ENCODE measurements at regions of chr6 and their contacts with region 1.

Region 1: GRCh38 chr6:28981833-28982475 is 23.2 kb downstream of the ZNF311 start:
- DNase-seq: peak; percentile 65
- ATAC-seq: peak; percentile 61
- H3K4me3 Mint-ChIP-seq: peak overlapping the region; percentile 89
- H3K27ac Mint-ChIP-seq: peak overlapping the region; percentile 97
- H3K4me1 Mint-ChIP-seq: peaks cover 50% of the 10 kb centered on the region
- H3K27me3 Mint-ChIP-seq: peaks cover 32% of the 10 kb centered on the region
- CTCF ChIP-seq: no peak

Region 2: DNA sequence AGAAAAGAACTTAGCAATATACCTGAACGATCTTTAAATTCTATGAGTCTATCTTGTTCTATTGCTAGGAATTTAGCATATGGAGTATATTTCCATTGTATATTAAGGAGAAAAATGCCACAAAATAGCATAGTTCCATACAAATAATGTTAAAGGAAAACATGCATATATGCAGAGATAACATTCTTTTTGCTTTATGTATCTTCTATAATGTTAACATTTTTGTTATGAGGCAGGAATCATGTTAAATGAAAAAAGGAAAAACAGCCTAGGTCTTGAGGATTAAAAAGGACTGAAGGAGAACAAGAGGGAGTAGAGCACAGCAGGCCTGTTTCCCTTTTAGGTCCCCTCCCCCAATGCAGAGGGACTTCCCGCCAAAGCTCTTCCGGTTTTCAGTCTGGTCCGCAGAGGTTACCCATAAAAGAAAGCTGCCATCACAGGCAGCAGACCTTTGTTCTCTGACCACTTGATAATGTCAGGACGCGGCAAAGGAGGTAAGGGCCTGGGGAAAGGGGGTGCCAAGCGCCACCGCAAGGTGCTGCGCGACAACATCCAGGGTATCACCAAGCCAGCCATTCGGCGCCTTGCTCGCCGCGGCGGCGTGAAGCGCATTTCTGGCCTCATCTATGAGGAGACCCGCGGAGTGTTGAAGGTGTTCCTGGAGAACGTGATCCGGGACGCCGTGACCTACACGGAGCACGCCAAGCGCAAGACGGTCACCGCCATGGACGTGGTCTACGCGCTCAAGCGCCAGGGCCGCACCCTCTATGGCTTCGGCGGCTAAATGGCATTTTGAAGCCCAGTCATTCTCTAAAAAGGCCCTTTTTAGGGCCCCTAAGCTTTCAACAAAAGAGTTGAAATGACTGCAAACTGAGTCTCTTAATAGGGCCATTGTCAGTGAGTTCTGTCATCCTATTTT is 1842.9 kb before region 1 on chr6:
- CTCF ChIA-PET with region 1: no interaction called
- POLR2A ChIA-PET with region 1: interaction called, 10 read pairs
- intact Hi-C with region 1: no loop called
- DNase-seq: peak; percentile 59
- ATAC-seq: peak; percentile 82
- H3K4me3 Mint-ChIP-seq: peak overlapping the region; percentile 97
- H3K27ac Mint-ChIP-seq: peak overlapping the region; percentile 98
- H3K4me1 Mint-ChIP-seq: peaks cover 62% of the 10 kb centered on the region
- H3K27me3 Mint-ChIP-seq: no peaks in the 10 kb centered on the region
- CTCF ChIP-seq: no peak

Region 3: GRCh38 chr6:28863604-28864320 is 118.2 kb before region 1 on chr6:
- CTCF ChIA-PET with region 1: no interaction called
- POLR2A ChIA-PET with region 1: interaction called, 3 read pairs
- intact Hi-C with region 1: loop called (anchors 1 kb)
- DNase-seq: peak; percentile 54
- ATAC-seq: peak; percentile 30
- H3K4me3 Mint-ChIP-seq: peak overlapping the region; percentile 85
- H3K27ac Mint-ChIP-seq: peak overlapping the region; percentile 90
- H3K4me1 Mint-ChIP-seq: peaks cover 27% of the 10 kb centered on the region
- H3K27me3 Mint-ChIP-seq: peaks cover 4% of the 10 kb centered on the region
- CTCF ChIP-seq: no peak

Region 4: DNA sequence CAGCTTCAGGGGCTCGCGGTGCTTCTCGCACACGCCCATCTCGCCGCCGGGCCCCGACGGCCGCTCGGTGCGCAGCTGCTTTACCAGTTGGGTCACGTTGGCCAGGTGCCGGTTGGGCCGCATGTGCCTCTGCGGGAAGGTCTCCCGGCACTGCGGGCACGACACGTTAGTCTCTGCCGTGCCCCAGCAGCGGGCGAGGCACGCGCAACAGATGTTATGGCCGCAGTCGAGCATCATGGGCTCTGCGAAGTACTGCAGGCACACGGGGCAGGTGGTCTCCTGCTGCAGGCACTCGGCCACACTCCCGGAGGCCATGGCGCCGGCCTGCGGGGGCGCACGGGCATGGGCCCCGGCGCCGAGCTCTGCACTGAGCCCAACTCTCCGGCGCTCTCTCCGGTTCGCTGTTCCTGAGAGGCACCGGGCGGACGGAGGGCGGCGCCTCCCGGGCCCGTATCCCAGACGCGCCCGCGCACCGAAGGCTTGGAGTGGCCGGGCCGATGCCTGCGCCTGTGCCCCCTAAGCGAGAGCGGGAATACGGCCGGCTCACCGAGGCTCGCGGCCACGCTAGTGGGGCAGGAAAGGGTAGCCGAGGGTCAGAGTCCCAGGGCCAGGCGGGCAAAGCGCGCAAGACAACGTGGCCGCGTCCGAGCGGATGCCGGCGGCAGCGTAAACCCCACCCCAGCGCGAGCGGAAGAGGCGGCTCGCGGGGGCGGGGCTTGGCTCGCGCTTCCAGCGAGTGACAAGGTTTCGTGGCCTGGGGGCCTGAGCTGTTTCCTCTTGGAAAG is 58.4 kb before region 1 on chr6 and contains the start of gene TRIM27:
- CTCF ChIA-PET with region 1: interaction called, 3 read pairs
- POLR2A ChIA-PET with region 1: interaction called, 16 read pairs
- intact Hi-C with region 1: loop called (anchors 1 kb)
- DNase-seq: peak; percentile 85
- ATAC-seq: peak; percentile 87
- H3K4me3 Mint-ChIP-seq: peak within 1 kb of the TSS; percentile 92
- H3K27ac Mint-ChIP-seq: peak within 1 kb of the TSS; percentile 92
- H3K4me1 Mint-ChIP-seq: peaks cover 42% of the 10 kb centered on the region
- H3K27me3 Mint-ChIP-seq: no peaks in the 10 kb centered on the region
- CTCF ChIP-seq: no peak
- total RNA-seq, gene TRIM27: 59.5 and 64.8 TPM in 2 replicates

Region 5: DNA sequence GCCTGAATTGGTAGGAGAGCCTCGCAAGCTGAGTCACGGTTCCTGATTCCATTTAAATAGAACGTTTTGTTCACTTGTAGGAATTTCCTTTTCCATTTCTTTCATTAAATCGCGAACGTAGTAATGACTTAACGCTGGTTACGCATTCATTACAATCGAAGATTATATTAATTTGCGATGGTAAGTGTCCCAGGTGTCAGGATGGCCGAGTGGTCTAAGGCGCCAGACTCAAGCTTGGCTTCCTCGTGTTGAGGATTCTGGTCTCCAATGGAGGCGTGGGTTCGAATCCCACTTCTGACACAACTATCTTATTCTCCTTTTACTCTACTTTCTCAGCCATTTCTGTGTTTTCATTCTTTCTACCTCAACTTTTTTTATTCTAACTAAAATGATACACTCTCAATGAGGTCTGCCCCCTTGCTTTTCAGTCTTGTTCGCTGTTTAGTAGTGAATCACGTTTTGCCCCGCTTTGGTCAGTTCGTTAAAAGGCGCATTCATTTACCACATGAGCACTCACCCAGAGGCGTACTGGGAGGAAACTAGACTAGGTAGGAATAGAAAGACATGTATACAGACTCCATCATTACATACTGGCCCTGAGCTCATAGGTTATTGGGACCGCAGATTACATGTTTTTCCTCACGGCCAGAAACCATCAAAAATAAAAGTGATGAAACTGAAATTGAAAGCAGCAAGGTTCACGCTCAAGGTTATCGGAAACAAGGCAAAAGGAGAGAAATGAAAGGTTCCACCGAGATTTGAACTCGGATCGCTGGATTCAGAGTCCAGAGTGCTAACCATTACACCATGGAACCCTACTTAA is 40.9 kb before region 1 on chr6:
- CTCF ChIA-PET with region 1: interaction called, 3 read pairs
- POLR2A ChIA-PET with region 1: interaction called, 5 read pairs
- intact Hi-C with region 1: loop called (anchors 1 kb)
- DNase-seq: peak; percentile 36
- ATAC-seq: peak; percentile 66
- H3K4me3 Mint-ChIP-seq: peak overlapping the region; percentile 95
- H3K27ac Mint-ChIP-seq: peak overlapping the region; percentile 88
- H3K4me1 Mint-ChIP-seq: peaks cover 47% of the 10 kb centered on the region
- H3K27me3 Mint-ChIP-seq: peaks cover 3% of the 10 kb centered on the region
- CTCF ChIP-seq: no peak

Region 6: GRCh38 chr6:28996844-28997510 is 15.0 kb after region 1 on chr6:
- CTCF ChIA-PET with region 1: no interaction called
- POLR2A ChIA-PET with region 1: no interaction called
- intact Hi-C with region 1: no loop called
- DNase-seq: no peak
- ATAC-seq: no peak
- H3K4me3 Mint-ChIP-seq: no peak overlapping the region
- H3K27ac Mint-ChIP-seq: no peak overlapping the region
- H3K4me1 Mint-ChIP-seq: no peaks in the 10 kb centered on the region
- H3K27me3 Mint-ChIP-seq: peaks cover 25% of the 10 kb centered on the region
- CTCF ChIP-seq: no peak